Activated B cell treated with CpG ODN at 0.5 μM for 24 hours (primary cell): ENCODE measurements at regions of chr22 and their contacts with region 1.

Region 1: DNA sequence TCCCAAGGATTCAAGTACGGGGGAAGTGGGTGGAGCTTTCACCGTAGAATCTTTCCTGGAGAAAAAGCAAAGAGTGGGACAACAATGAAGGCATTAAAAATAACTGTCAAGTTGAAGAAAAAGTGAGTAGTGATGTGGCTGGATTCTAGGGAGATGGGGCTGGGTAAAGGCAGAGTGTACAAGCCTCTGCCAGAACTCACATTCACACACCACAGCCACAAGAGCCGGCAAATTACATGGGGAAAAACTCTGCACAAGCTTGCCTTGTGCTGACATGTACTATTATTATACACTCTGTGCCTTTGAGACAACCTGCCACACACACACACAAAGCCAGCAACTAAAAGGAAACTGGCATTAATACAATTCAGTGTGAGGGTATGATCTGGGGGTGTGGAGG is 182.6 kb downstream of the LARGE1 start:
- DNase-seq: no peak
- ATAC-seq: no peak
- H3K4me3 Mint-ChIP-seq: no peak overlapping the region
- H3K27ac Mint-ChIP-seq: no peak overlapping the region
- H3K4me1 Mint-ChIP-seq: peaks cover 25% of the 10 kb centered on the region
- H3K27me3 Mint-ChIP-seq: no peaks in the 10 kb centered on the region
- CTCF ChIP-seq: no peak

Region 2: GRCh38 chr22:33766091-33766490 is 28.4 kb after region 1 on chr22:
- CTCF ChIA-PET with region 1: no interaction called
- POLR2A ChIA-PET with region 1: interaction called, 11 read pairs
- intact Hi-C with region 1: no loop called
- DNase-seq: no peak
- ATAC-seq: no peak
- H3K4me3 Mint-ChIP-seq: no peak overlapping the region
- H3K27ac Mint-ChIP-seq: no peak overlapping the region
- H3K4me1 Mint-ChIP-seq: peaks cover 12% of the 10 kb centered on the region
- H3K27me3 Mint-ChIP-seq: no peaks in the 10 kb centered on the region
- CTCF ChIP-seq: no peak

Region 3: DNA sequence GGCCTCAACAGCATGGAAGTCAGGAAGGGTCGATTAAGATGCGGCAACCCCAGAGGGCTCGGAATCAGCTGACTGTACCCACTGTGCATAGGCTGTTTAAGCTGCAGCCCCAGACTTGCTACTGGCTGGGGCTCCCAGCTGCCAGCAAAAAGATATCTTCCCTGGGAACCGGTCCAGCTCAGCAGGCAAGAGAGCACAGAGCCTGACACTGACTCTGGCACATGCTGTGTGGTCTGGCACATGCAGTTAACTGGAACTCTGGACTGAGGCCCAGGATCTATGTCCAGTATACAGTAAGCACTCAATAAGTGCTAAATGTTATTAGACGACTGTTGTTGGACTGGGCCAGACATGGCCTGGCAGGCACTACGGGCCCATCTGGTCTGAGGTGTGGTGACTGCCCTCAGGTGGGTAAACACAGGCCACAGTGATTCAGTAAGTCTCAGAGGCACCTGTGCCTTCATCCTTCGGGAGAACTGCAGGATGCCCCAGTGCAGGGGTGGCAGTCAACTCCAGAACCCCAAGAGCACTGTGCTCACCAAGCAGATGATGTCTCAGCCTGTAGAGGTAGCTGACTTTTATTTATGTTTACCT is 95.0 kb after region 1 on chr22:
- CTCF ChIA-PET with region 1: no interaction called
- POLR2A ChIA-PET with region 1: no interaction called
- intact Hi-C with region 1: no loop called
- DNase-seq: no peak
- ATAC-seq: no peak
- H3K4me3 Mint-ChIP-seq: no peak overlapping the region
- H3K27ac Mint-ChIP-seq: no peak overlapping the region
- H3K4me1 Mint-ChIP-seq: peaks cover 3% of the 10 kb centered on the region
- H3K27me3 Mint-ChIP-seq: no peaks in the 10 kb centered on the region
- CTCF ChIP-seq: no peak